A673 (cell line): ENCODE measurements at regions of chr6 and their contacts with region 1.

Region 1: DNA sequence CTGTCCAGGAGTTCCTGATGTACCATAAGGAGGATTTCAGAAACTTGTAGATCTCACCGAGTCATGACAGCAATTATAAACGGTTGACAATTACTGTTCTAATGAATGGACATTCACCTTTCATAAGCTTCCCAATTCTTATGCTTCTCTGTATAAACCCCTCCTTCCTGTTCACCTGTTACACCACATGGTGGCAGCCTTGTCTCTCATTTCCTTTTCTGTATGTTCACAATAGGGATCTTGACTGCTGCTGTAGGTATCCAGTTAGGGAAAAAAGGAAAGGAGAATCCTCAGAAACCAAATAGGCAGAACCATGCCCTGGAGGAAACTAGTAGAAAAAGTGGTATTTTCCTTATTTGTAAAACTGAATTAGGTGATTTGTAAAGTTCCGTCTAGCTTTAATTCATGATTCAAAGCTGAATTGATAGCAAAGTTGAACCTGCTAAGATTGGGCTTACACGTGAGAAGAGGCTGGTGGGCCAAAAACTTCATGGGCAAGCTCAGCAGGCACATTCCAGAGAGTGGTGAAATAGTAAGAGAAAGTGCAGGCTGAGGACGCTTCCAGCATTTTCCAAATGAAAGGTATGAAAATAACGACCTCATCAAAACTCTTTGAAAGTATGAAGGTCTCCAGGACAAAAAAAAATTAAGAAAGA is 29.0 kb upstream of the TBPL1 start:
- DNase-seq: peak; percentile 81
- H3K4me3 ChIP-seq: no peak overlapping the region
- H3K27ac ChIP-seq: no peak overlapping the region
- H3K4me1 ChIP-seq: no peaks in the 10 kb centered on the region
- H3K27me3 ChIP-seq: peaks cover 30% of the 10 kb centered on the region
- CTCF ChIP-seq: peak; percentile 82

Region 2: GRCh38 chr6:132758761-132759160 is 1165.3 kb before region 1 on chr6:
- CTCF ChIA-PET with region 1: interaction called, 11 read pairs
- POLR2A ChIA-PET with region 1: no interaction called
- intact Hi-C with region 1: no loop called
- DNase-seq: no peak
- H3K4me3 ChIP-seq: no peak overlapping the region
- H3K27ac ChIP-seq: no peak overlapping the region
- H3K4me1 ChIP-seq: no peaks in the 10 kb centered on the region
- H3K27me3 ChIP-seq: no peaks in the 10 kb centered on the region
- CTCF ChIP-seq: no peak

Region 3: GRCh38 chr6:133568970-133569889 is 354.8 kb before region 1 on chr6:
- CTCF ChIA-PET with region 1: interaction called, 14 read pairs
- POLR2A ChIA-PET with region 1: no interaction called
- intact Hi-C with region 1: no loop called
- DNase-seq: peak; percentile 67
- H3K4me3 ChIP-seq: peak overlapping the region; percentile 27
- H3K27ac ChIP-seq: no peak overlapping the region
- H3K4me1 ChIP-seq: peaks cover 3% of the 10 kb centered on the region
- H3K27me3 ChIP-seq: peaks cover 90% of the 10 kb centered on the region
- CTCF ChIP-seq: peak; percentile 94

Region 4: DNA sequence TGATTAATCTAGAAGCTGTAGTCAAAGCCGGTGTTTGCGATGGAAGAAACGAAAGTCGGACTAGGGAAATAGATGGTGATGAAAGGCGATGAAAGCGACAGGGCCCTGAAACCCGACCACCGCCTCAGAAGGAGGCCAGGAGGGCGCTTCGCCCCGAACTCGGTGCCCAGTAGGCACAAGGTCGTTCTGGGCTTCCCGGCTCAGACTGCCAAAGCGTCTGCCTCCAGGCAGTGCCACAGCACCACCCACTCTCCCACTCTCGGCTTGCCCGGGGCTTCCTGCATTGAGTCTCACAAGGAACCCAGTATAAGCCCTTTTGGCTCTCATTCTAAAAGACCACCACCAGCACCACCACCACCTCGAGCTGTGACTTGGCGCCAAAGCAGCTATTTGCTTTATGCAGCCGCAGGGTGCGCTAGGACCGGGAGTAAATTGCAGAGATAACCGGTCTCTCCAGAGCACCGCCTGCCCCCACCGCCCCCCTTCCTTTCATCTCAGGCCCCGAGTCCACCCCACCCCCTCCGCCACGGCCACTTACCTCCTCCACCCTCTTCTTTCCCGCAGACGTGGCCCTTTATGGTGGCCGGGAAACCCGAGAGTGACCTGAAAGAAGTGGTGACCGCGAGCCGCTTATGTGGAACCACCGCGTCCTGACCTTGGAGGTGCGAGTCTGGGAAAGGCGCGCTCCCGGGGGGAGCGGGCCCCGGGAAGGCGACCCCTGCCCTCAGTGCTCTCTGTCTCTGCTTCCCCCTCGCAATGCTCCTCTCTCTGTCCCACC is 32.7 kb before region 1 on chr6:
- CTCF ChIA-PET with region 1: no interaction called
- POLR2A ChIA-PET with region 1: no interaction called
- intact Hi-C with region 1: no loop called
- DNase-seq: no peak
- H3K4me3 ChIP-seq: no peak overlapping the region
- H3K27ac ChIP-seq: no peak overlapping the region
- H3K4me1 ChIP-seq: no peaks in the 10 kb centered on the region
- H3K27me3 ChIP-seq: peaks cover 100% of the 10 kb centered on the region
- CTCF ChIP-seq: no peak

Region 5: DNA sequence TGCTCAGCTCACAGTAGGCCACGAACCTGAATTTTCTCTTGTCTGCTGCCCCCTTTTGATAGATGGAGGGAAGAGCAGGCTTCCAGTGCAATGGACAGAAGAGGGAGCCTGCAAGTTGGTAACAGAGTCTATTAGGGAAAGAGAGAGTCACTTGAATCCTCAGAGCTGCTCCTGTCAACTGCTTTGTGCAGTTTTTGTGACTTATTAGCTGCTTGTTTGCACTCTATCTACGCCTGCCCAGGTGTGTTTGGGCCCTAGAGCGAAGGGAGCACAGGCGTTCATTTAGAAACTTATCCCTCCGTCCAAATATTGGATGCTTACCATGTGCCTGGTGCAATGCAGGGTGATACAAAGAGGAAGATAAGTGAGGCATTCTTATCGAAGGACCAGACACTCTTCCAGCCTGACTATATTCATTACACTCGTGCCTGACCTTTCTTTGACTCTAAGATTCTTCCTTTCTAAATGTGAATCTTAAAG is 139.9 kb after region 1 on chr6:
- CTCF ChIA-PET with region 1: interaction called, 14 read pairs
- POLR2A ChIA-PET with region 1: no interaction called
- intact Hi-C with region 1: loop called (anchors 1 kb)
- DNase-seq: peak; percentile 81
- H3K4me3 ChIP-seq: no peak overlapping the region
- H3K27ac ChIP-seq: no peak overlapping the region
- H3K4me1 ChIP-seq: no peaks in the 10 kb centered on the region
- H3K27me3 ChIP-seq: no peaks in the 10 kb centered on the region
- CTCF ChIP-seq: peak; percentile 90

Region 6: DNA sequence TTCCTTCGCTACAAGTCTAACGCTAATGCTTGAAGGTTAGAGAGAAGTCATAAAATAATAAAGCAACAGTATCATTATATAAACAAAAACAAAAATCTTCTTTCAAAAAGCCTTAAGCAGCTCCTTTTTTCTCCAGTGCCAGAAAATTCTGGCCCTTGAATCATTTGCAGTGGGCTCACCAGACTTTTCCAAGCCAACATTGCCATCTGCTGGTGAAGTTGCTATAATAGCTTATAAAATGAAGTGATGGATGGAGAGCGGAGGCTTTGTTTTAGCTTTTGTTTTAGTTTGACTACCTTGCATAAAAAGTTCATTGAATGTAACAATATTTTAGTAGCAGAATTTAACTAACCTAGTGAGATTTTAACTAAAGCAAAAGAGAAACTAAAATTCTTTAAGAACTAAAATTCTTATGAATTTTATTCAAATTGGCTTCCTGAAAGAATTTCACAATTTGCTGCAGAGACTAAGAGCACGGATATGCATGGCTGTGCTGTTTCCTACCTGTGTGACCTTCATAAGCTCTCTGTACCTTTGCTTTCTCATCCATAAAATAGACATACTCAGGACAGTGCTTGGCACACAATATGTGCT is 173.1 kb after region 1 on chr6:
- CTCF ChIA-PET with region 1: interaction called, 103 read pairs
- POLR2A ChIA-PET with region 1: no interaction called
- intact Hi-C with region 1: loop called (anchors 1 kb)
- DNase-seq: peak; percentile 80
- H3K4me3 ChIP-seq: no peak overlapping the region
- H3K27ac ChIP-seq: no peak overlapping the region
- H3K4me1 ChIP-seq: peaks cover 10% of the 10 kb centered on the region
- H3K27me3 ChIP-seq: no peaks in the 10 kb centered on the region
- CTCF ChIP-seq: peak; percentile 70

Region 7: DNA sequence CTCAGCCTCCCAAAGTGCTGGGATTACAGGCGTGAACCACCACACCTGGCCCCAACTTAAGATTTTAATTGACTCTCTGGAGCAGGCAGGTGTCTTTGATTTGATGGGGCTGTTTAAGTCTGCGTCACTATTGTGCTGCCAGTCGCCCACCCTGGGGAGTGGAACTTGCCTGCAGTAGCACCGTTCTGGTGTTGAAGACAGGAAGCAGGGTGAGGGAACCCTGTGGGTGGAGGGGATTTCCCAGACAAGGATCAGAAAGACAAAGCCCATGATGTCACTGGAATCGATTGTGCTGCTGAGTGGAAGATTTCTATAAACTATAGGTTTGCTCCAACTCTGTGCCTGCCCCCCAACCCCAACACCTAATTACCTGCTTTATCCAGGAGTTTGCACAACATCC is 1014.8 kb after region 1 on chr6:
- CTCF ChIA-PET with region 1: interaction called, 3 read pairs
- POLR2A ChIA-PET with region 1: no interaction called
- intact Hi-C with region 1: loop called (anchors 5 kb)
- DNase-seq: peak; percentile 6
- H3K4me3 ChIP-seq: no peak overlapping the region
- H3K27ac ChIP-seq: no peak overlapping the region
- H3K4me1 ChIP-seq: no peaks in the 10 kb centered on the region
- H3K27me3 ChIP-seq: no peaks in the 10 kb centered on the region
- CTCF ChIP-seq: no peak